ENCODE measurements at regions of chr14 and their contacts with region 1.

Region 1: GRCh38 chr14:93115069-93115820 is 480 bp downstream of the ITPK1 start:
- DNase-seq: peak; percentile 94
- H3K4me3 ChIP-seq: peak overlapping the region; percentile 83 to 87
- H3K27ac ChIP-seq: peak overlapping the region; percentile 61 to 91; a peak in 3 of 4 replicates
- H3K4me1 ChIP-seq: peaks cover 0 to 33% of the 10 kb centered on the region in 2 experiments; a peak in 3 of 4 replicates
- H3K27me3 ChIP-seq: no peaks in the 10 kb centered on the region
- CTCF ChIP-seq: no peak
- EP300 ChIP-seq: no peak
- RAD21 ChIP-seq: no peak

Region 2: GRCh38 chr14:92890830-92891588 is 224.2 kb before region 1 on chr14:
- CTCF ChIA-PET with region 1: no interaction called
- POLR2A ChIA-PET with region 1: no interaction called
- DNase-seq: no peak
- H3K4me3 ChIP-seq: no peak overlapping the region
- H3K27ac ChIP-seq: peak overlapping the region in 1 of 2 experiments; percentile 81; a peak in 2 of 4 replicates
- H3K4me1 ChIP-seq: peaks cover 0 to 38% of the 10 kb centered on the region in 2 experiments; a peak in 2 of 4 replicates
- H3K27me3 ChIP-seq: no peaks in the 10 kb centered on the region; the same call in 1 of the 2 replicates
- CTCF ChIP-seq: no peak
- EP300 ChIP-seq: peak in 1 of 2 experiments; percentile 84; a peak in 2 of 4 replicates
- RAD21 ChIP-seq: peak; percentile 34; the same call in 1 of the 2 replicates

Region 3: GRCh38 chr14:92951912-92952471 is 163.3 kb before region 1 on chr14:
- CTCF ChIA-PET with region 1: interaction called, 100 read pairs
- POLR2A ChIA-PET with region 1: interaction called, 3 read pairs
- DNase-seq: peak; percentile 93
- H3K4me3 ChIP-seq: no peak overlapping the region; a peak in 1 of 4 replicates
- H3K27ac ChIP-seq: peak overlapping the region in 1 of 2 experiments; percentile 54; a peak in 1 of 4 replicates
- H3K4me1 ChIP-seq: peaks cover 0 to 49% of the 10 kb centered on the region in 2 experiments; a peak in 1 of 4 replicates
- H3K27me3 ChIP-seq: no peaks in the 10 kb centered on the region
- CTCF ChIP-seq: peak; percentile 92
- EP300 ChIP-seq: no peak
- RAD21 ChIP-seq: peak; percentile 95

Region 4: DNA sequence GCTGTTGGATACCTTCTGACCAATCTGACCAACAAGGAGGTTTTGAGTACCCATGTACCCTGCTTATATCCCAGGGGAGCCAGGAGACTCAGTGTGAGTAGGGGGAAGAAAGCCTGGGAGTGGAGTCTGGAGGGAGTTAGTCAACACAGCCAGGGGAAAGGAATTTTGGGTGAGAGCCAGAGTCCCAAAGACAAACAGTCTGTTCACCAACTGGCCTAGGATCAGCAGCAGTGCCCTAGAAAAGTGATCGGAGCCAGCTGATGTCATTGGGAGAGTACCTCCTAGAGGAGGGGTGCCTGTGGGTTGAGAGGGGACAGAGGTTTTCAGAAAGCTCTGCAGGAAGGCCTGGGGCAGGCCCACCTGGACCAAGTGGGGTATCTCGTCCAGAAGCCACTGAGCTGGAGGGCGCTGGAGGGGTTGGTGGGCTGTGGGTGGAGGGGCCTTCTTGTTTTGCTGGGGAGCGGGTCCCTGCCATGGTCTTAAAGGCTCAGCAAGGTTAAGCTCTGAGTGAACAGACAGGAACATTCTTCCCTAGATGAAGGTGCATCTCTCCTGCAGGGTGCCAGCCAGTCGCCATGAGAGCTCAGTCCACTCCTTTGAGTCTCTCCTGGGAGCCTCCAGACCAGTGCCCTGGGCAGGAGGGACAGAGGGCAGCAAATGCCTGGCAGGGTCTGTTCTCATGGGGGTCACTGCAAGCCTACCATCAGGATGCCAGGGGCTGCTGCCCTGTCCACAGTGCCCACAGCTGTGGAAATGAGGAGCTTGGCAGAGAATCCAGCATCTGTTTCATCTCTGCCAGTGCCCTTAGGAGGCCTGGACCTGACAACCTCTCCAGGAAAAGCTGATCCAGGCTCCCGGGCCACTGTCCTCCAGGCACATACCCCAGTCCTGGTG is 128.7 kb before region 1 on chr14:
- CTCF ChIA-PET with region 1: interaction called, 15 read pairs
- POLR2A ChIA-PET with region 1: interaction called, 5 read pairs
- DNase-seq: peak; percentile 69
- H3K4me3 ChIP-seq: no peak overlapping the region
- H3K27ac ChIP-seq: peak overlapping the region; percentile 41 to 97; a peak in 3 of 4 replicates
- H3K4me1 ChIP-seq: peaks cover 0 to 65% of the 10 kb centered on the region in 2 experiments; a peak in 2 of 4 replicates
- H3K27me3 ChIP-seq: no peaks in the 10 kb centered on the region
- CTCF ChIP-seq: no peak
- EP300 ChIP-seq: peak in 1 of 2 experiments; percentile 53; a peak in 1 of 4 replicates
- RAD21 ChIP-seq: no peak

Region 5: GRCh38 chr14:93033983-93034670 is 81.1 kb before region 1 on chr14:
- CTCF ChIA-PET with region 1: interaction called, 13 read pairs
- POLR2A ChIA-PET with region 1: no interaction called
- DNase-seq: peak; percentile 77
- H3K4me3 ChIP-seq: no peak overlapping the region
- H3K27ac ChIP-seq: peak overlapping the region in 1 of 2 experiments; percentile 4; a peak in 1 of 4 replicates
- H3K4me1 ChIP-seq: peaks cover 8 to 55% of the 10 kb centered on the region in 2 experiments; a peak in 3 of 4 replicates
- H3K27me3 ChIP-seq: no peaks in the 10 kb centered on the region
- CTCF ChIP-seq: peak; percentile 50
- EP300 ChIP-seq: no peak
- RAD21 ChIP-seq: peak; percentile 48

Region 6: GRCh38 chr14:93073910-93074769 is 41.1 kb before region 1 on chr14:
- CTCF ChIA-PET with region 1: interaction called, 11 read pairs
- POLR2A ChIA-PET with region 1: interaction called, 5 read pairs
- DNase-seq: no peak
- H3K4me3 ChIP-seq: no peak overlapping the region
- H3K27ac ChIP-seq: no peak overlapping the region
- H3K4me1 ChIP-seq: peaks cover 4 to 24% of the 10 kb centered on the region in 2 experiments; a peak in 2 of 4 replicates
- H3K27me3 ChIP-seq: no peaks in the 10 kb centered on the region
- CTCF ChIP-seq: no peak
- EP300 ChIP-seq: no peak
- RAD21 ChIP-seq: no peak

Region 7: DNA sequence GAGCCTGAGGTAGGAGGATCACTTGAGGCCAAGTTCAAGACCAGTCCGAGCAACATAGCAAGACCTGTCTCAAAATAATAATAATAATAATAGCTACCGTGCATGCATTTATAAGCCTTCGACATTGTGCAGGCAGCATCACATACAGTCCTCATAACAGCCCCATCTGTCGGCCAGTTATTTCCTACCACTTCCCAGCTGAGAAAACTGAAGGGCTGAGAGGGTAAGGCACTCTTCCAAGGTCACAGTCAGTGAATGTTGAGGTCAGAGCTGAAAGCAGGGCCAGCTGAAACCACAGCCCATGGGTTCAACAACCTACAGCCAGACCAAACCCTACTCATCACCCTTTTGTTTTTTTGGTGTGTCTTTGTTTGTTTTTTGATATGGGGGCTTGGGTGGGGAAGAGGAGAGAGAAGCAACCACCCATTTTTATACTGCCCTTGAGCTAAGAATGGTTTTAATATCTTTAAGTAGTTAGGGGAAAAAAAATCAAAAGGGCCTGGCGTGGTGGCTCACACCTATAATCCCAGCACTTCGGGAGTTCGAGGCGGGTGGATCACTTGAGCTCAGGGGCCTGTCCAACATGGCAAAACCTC is 17.3 kb after region 1 on chr14:
- CTCF ChIA-PET with region 1: interaction called, 236 read pairs
- POLR2A ChIA-PET with region 1: interaction called, 5 read pairs
- DNase-seq: peak; percentile 63
- H3K4me3 ChIP-seq: no peak overlapping the region
- H3K27ac ChIP-seq: no peak overlapping the region
- H3K4me1 ChIP-seq: no peaks in the 10 kb centered on the region; a peak in 1 of 4 replicates
- H3K27me3 ChIP-seq: no peaks in the 10 kb centered on the region
- CTCF ChIP-seq: peak; percentile 54
- EP300 ChIP-seq: no peak
- RAD21 ChIP-seq: peak; percentile 54